ENCODE measurements at regions of chr6 and their contacts with region 1.

Region 1: DNA sequence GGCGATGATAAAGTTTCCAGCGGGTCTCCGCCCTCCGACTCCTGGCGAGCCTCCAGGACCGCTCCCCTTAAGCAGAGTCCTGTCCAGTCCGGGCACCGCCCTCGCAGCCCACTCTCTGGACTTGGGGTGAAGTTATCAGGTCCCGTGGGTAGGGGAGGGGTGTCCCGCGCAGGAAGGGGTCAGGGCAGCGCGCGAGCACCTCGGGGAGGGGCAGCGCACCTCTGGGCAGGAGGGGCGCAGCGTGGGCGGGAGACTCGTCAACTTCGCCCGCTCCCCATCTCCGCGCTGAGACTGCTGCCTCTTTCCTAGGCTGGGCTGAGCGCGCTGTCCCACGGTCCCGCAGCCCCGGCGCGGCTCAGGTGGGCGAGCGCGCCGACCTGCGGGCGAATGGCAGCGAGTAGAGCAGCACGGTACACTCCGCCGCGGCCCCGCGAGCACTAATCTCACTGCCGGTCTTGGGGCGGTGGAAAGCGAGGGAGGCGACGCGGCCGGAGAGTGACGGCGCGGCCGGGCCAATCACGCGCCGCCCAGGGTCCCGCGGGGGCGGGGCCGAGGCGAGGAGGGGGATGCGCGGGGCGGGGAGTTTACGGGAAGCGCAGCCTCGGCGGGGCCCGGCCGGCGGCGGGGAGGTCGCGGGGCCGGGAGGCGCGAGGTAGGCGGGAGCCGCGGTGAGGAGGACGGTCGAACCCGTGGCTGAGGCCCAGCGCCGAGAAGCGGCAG is at the start of gene MAN1A1:
- DNase-seq: peak; percentile 60
- H3K4me3 ChIP-seq: peak within 1 kb of the TSS; percentile 57 to 89 (median 79)
- H3K27ac ChIP-seq: peak within 1 kb of the TSS; percentile 11
- H3K4me1 ChIP-seq: peaks cover 13% of the 10 kb centered on the region
- H3K27me3 ChIP-seq: peaks cover 12% of the 10 kb centered on the region
- CTCF ChIP-seq: no peak
- total RNA-seq, gene MAN1A1: 4.0 to 5.3 TPM

Region 2: DNA sequence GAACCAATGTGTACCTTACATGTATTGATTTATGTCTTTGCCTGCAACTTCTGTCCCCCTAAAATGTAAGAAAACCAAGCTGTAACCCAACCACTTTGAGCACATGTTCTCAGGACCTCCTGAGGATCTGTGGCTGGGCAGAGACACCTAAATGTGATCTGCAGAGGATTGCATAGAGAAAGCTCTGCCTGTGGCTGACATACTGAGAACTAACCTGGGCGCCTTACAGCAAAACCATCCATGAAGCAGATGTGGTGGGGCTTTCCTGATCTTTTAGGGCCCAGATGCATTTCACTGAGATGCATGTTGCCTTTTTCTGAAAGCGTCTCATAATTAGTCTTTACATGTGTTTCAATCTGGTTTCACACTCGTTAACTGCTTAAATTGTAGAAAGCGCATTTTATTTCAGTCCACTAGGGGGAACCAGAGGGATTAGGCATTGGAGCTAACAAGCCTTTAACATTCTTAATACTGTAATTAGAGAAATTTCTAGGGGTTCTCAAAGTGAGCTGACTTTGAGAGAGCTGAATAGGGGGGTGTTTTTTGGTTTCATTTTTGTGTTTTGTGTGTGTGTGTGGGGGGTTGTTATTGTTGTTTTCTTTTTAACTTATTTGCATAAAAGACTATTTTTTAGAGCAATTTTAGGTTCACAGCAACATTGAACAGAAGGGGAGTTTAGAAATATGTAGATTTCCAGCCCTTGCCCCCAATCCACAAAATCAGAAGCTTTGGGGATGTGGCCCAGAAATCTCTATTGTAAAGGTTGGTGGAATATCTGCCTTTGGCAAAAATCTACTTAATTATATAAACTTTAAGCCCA is 220.1 kb before region 1 on chr6:
- CTCF ChIA-PET with region 1: no interaction called
- dilution Hi-C with region 1: no loop called
- in situ Hi-C with region 1: no loop called
- intact Hi-C with region 1: loop called (anchors 1 kb)
- DNase-seq: peak; percentile 53
- H3K4me3 ChIP-seq: no peak overlapping the region
- H3K27ac ChIP-seq: peak overlapping the region; percentile 58
- H3K4me1 ChIP-seq: peaks cover 12% of the 10 kb centered on the region
- H3K27me3 ChIP-seq: no peaks in the 10 kb centered on the region
- CTCF ChIP-seq: peak; percentile 86 to 93

Region 3: GRCh38 chr6:119250036-119250435 is 99.4 kb before region 1 on chr6:
- CTCF ChIA-PET with region 1: no interaction called
- dilution Hi-C with region 1: no loop called
- in situ Hi-C with region 1: no loop called
- intact Hi-C with region 1: no loop called
- DNase-seq: no peak
- H3K4me3 ChIP-seq: no peak overlapping the region
- H3K27ac ChIP-seq: no peak overlapping the region
- H3K4me1 ChIP-seq: no peaks in the 10 kb centered on the region
- H3K27me3 ChIP-seq: no peaks in the 10 kb centered on the region
- CTCF ChIP-seq: no peak

Region 4: GRCh38 chr6:119395192-119395591 is 45.7 kb after region 1 on chr6:
- CTCF ChIA-PET with region 1: no interaction called
- dilution Hi-C with region 1: no loop called
- in situ Hi-C with region 1: no loop called
- intact Hi-C with region 1: no loop called
- DNase-seq: no peak
- H3K4me3 ChIP-seq: no peak overlapping the region
- H3K27ac ChIP-seq: no peak overlapping the region
- H3K4me1 ChIP-seq: no peaks in the 10 kb centered on the region
- H3K27me3 ChIP-seq: peaks cover 2% of the 10 kb centered on the region
- CTCF ChIP-seq: no peak

Region 5: DNA sequence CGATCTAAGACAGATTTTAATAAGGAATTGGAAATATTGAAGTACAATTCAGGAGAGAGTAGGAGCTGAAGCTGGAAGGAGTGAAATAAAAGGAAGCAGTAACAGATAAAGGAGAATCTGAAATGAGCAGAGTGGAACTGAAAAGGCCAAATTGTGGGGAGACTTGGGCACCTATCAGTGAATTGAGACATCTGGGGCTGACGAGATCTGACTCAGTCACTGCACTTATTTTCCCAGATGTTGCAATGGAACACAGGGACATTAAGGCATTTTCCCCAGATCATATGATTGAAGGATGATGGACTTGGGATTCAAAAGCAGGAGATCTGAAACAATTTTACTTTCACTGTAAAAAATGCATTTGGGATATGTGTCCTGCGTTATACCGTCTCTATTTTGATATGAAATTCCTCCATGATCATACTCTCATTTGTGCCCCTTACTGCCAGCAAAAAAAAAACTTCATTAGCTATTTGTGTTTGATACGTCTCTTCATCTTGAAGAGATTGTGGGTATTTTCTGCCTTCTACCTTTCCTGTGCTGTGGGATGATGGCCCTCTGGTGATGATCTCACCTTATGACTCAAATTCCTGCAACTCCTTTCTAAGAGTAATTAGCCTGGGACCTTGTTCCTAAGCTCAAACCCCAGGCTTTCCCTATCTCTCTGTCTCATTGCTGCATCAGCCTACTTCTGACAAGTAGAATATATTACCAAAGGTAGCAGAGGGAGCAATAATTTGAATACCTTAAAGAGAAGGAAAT is 278.6 kb after region 1 on chr6:
- CTCF ChIA-PET with region 1: interaction called, 7 read pairs
- dilution Hi-C with region 1: no loop called
- in situ Hi-C with region 1: no loop called
- intact Hi-C with region 1: loop called (anchors 1 kb)
- DNase-seq: peak; percentile 80
- H3K4me3 ChIP-seq: no peak overlapping the region
- H3K27ac ChIP-seq: peak overlapping the region; percentile 59
- H3K4me1 ChIP-seq: peaks cover 17% of the 10 kb centered on the region
- H3K27me3 ChIP-seq: no peaks in the 10 kb centered on the region
- CTCF ChIP-seq: peak; percentile 5 to 46

Region 6: GRCh38 chr6:119742188-119742803 is 392.8 kb after region 1 on chr6:
- CTCF ChIA-PET with region 1: no interaction called
- dilution Hi-C with region 1: no loop called
- in situ Hi-C with region 1: no loop called
- intact Hi-C with region 1: loop called (anchors 1 kb)
- DNase-seq: peak; percentile 33
- H3K4me3 ChIP-seq: no peak overlapping the region
- H3K27ac ChIP-seq: no peak overlapping the region
- H3K4me1 ChIP-seq: no peaks in the 10 kb centered on the region
- H3K27me3 ChIP-seq: peaks cover 2% of the 10 kb centered on the region
- CTCF ChIP-seq: peak; percentile 81 to 96

Region 7: DNA sequence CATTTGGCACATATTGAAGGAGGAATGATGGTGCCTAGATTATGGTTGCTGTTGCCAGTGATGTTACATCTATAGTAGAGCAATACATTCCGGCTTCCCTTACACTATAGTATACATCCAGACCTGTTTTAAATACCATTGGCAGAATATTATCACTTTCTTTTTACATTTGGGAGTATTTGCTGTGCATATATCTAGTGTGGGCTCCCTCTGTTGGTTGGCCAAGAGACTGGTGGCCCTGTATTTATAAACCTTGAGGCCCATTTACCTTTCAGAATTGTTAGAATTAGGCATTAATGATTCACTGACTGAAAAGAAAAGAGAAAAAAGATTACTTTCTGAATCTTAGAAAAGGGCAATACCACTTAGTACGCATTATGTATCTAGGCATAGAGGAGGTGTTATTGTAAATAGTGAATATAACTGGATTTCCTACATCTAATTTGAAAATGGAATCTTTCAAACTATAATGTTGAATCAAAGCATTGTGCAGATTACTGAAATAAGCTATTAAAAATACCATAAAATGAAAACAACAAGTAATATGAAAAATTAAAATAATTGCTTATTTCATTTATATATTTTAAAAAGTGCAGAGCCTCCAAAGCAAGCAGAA is 628.9 kb after region 1 on chr6:
- CTCF ChIA-PET with region 1: no interaction called
- dilution Hi-C with region 1: no loop called
- in situ Hi-C with region 1: no loop called
- intact Hi-C with region 1: loop called (anchors 1 kb)
- DNase-seq: peak; percentile 17
- H3K4me3 ChIP-seq: no peak overlapping the region
- H3K27ac ChIP-seq: no peak overlapping the region
- H3K4me1 ChIP-seq: no peaks in the 10 kb centered on the region
- H3K27me3 ChIP-seq: no peaks in the 10 kb centered on the region
- CTCF ChIP-seq: peak; percentile 57 to 77

Region 8: GRCh38 chr6:120378582-120379220 is 1029.2 kb after region 1 on chr6:
- CTCF ChIA-PET with region 1: no interaction called
- dilution Hi-C with region 1: no loop called
- in situ Hi-C with region 1: no loop called
- intact Hi-C with region 1: loop called (anchors 10 kb)
- DNase-seq: peak; percentile 40
- H3K4me3 ChIP-seq: no peak overlapping the region
- H3K27ac ChIP-seq: no peak overlapping the region
- H3K4me1 ChIP-seq: no peaks in the 10 kb centered on the region
- H3K27me3 ChIP-seq: no peaks in the 10 kb centered on the region
- CTCF ChIP-seq: peak; percentile 79 to 83